Activated CD4-positive, alpha-beta T cell treated with anti-CD3 and anti-CD28 coated beads for 36 hours (primary cell): ENCODE measurements at regions of chr3 and their contacts with region 1.

Region 1: DNA sequence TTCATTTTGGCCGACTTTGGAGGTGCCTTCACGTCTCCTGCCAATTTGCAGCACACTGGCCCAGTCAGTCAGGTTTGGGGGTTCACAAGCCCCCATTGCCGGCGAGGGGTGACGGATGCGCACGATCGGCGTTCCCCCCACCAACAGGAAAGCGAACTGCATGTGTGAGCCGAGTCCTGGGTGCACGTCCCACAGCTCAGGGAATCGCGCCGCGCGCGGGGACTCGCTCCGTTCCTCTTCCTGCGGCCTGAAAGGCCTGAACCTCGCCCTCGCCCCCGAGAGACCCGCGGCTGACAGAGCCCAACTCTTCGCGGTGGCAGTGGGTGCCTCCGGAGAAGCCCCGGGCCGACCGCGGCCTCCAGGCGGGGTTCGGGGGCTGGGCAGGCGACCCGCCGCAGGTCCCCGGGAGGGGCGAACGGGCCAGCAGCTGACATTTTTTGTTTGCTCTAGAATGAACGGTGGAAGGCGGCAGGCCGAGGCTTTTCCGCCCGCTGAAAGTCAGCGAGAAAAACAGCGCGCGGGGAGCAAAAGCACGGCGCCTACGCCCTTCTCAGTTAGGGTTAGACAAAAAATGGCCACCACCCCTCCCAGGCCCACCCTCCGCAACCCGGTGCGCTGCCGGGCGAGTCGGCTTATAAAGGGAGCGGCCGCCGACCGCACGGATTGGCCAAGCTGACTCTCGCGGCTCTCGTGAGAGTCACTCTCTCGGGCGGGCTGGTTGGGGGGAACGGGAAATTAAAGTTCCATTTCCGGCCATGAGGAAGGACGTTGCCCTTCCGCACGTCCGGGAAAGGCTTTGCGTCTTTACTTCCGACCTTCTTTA is at the start of gene TERC:
- DNase-seq: peak; percentile 95
- ATAC-seq: peak; percentile 84
- H3K4me3 Mint-ChIP-seq: peak within 1 kb of the TSS; percentile 91
- H3K27ac Mint-ChIP-seq: peak within 1 kb of the TSS; percentile 98
- H3K4me1 Mint-ChIP-seq: peaks cover 23% of the 10 kb centered on the region
- H3K27me3 Mint-ChIP-seq: no peaks in the 10 kb centered on the region
- total RNA-seq, gene TERC: 2.6 to 11.1 TPM

Region 2: DNA sequence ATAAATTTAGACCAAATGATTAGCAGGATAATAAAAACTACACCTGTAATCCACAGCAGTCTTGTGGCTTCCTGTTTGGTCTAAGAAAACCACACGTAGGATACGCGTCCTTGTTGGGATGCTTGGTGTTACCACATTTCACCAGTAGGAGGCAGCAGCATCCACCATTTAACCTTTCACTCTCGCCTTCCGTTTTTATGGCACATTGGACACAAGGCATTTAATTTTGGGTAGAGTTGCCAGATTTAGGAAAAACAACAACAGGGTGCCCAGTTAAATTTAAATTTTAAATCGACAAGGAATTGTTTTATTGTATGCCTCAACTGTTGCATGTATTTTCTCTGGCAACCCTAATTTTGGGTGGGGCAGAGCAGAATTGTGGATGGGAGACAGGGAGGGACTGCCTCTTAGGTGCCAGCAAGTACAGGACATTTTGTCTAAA is 98.8 kb after region 1 on chr3:
- CTCF ChIA-PET with region 1: no interaction called
- POLR2A ChIA-PET with region 1: no interaction called
- intact Hi-C with region 1: loop called (anchors 1 to 5 kb)
- DNase-seq: peak; percentile 77
- ATAC-seq: peak; percentile 61
- H3K4me3 Mint-ChIP-seq: no peak overlapping the region
- H3K27ac Mint-ChIP-seq: no peak overlapping the region
- H3K4me1 Mint-ChIP-seq: peaks cover 18% of the 10 kb centered on the region
- H3K27me3 Mint-ChIP-seq: peaks cover 4% of the 10 kb centered on the region

Region 3: GRCh38 chr3:170037463-170038433 is 273.1 kb after region 1 on chr3 and contains the start of gene GPR160:
- CTCF ChIA-PET with region 1: no interaction called
- POLR2A ChIA-PET with region 1: no interaction called
- intact Hi-C with region 1: loop called (anchors 1 to 5 kb)
- DNase-seq: peak; percentile 92
- ATAC-seq: peak; percentile 92
- H3K4me3 Mint-ChIP-seq: peak within 1 kb of the TSS; percentile 79
- H3K27ac Mint-ChIP-seq: no peak within 1 kb of the TSS
- H3K4me1 Mint-ChIP-seq: peaks cover 19% of the 10 kb centered on the region
- H3K27me3 Mint-ChIP-seq: no peaks in the 10 kb centered on the region
- total RNA-seq, gene GPR160: 9.4 to 11.1 TPM

Region 4: DNA sequence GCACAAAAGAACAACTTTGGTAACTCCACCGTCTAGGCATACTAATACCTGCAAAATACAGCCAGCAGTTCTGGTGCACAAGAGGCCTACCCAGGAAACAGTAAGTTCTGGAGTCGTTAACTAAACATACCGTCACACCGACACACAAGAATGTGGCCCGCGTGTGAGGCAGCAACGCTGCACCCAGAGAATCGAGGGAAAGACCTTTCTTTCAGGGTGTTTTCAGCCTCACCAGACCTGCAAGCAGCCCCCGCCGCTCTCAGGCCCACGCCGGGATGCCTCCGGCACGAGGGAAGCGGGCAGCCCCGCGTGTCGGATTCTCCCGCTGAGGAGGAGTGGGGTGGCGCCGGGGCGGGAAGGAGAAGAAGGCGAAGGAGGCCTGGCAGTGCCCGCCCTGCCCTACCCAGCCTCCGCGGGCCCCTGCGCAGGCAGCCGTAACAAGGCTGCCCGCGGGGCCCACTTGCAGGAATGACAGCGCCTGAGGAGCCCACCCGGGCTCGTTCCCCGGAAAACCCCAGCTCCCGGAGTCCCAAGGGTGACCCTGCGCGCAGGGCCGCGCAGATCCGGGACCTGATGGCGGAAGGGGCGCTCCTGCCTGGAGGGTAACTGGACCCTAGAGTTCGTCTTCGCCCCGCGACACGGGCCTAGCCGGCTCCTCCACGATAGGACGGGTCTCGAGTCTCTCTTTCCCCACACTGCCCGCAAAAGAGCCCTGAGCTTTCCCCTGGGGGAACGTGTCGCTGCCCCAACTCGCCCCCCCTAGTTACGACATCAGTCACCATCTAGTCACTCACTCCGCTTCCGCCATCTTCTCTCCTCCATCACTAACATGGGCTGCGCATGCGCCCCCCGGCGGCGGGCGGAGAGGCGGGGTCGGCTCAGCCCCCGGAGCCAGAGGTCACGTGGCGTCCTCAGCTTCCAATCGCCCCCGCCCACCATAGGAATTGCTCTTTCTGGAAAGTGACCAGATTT is 416.5 kb after region 1 on chr3 and contains the start of gene PHC3:
- CTCF ChIA-PET with region 1: interaction called, 3 read pairs
- POLR2A ChIA-PET with region 1: no interaction called
- intact Hi-C with region 1: loop called in 1 of 2 experiments (anchors 2 kb)
- DNase-seq: peak; percentile 96
- ATAC-seq: peak; percentile 79
- H3K4me3 Mint-ChIP-seq: peak within 1 kb of the TSS; percentile 97
- H3K27ac Mint-ChIP-seq: peak within 1 kb of the TSS; percentile 99
- H3K4me1 Mint-ChIP-seq: peaks cover 21% of the 10 kb centered on the region
- H3K27me3 Mint-ChIP-seq: no peaks in the 10 kb centered on the region
- total RNA-seq, gene PHC3: 47.6 to 83.9 TPM

Region 5: DNA sequence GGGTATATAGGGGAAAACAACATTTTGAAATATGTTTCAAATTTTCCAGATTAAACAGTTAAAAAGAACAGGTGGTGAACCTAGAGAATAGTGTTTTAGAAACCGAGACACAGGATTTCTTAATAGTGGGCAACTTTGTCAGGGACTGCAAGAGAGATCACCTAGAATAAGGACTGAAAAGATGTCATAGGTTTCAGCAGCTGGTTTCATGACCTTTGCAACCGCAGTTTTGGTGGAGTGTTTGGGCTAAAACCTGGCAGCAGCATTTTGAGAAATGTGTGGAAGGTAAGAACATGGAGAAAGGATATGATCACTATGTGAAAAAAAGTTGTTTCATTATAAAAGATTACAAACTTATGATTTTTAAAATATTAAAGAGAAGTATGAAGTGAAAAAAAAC is 492.5 kb after region 1 on chr3:
- CTCF ChIA-PET with region 1: no interaction called
- POLR2A ChIA-PET with region 1: no interaction called
- intact Hi-C with region 1: loop called in 1 of 2 experiments (anchors 10 kb)
- DNase-seq: peak; percentile 59
- ATAC-seq: peak; percentile 66
- H3K4me3 Mint-ChIP-seq: no peak overlapping the region
- H3K27ac Mint-ChIP-seq: peak overlapping the region; percentile 58
- H3K4me1 Mint-ChIP-seq: peaks cover 43% of the 10 kb centered on the region
- H3K27me3 Mint-ChIP-seq: no peaks in the 10 kb centered on the region

Region 6: DNA sequence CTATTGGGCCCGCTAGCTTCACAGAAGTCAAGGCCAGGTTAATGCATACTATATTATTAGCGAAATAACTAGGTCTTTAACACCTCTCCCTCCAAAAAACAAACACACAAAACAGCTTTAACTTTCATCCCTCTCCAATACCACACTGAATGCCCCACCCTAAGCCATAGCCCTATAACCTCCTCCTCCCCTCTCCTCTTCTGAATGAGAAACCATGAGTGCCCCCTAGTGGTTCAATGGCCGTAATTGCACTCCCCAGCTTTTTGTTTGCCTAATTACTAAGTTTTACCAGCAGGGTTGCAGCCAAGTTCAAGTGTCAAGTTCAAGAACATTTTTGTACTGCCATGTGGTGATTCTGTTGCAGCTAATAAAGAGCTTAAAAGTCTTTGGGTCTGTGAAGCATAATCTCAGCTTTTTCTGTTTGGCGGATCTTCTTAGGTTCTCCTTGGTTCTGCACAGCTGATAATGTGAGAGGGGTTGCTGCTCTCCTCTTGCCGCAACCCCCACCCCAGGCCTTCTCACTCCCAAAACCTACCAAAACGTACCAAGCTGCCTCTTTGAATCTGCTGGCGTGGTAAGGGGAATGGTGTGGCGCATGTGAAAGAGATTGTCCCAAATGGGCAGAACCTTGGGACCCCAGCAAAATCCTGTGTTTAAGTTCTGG is 1047.4 kb after region 1 on chr3:
- CTCF ChIA-PET with region 1: interaction called, 3 read pairs
- POLR2A ChIA-PET with region 1: no interaction called
- intact Hi-C with region 1: loop called in 1 of 2 experiments (anchors 5 kb)
- DNase-seq: peak; percentile 77
- ATAC-seq: peak; percentile 88
- H3K4me3 Mint-ChIP-seq: no peak overlapping the region
- H3K27ac Mint-ChIP-seq: no peak overlapping the region
- H3K4me1 Mint-ChIP-seq: peaks cover 4% of the 10 kb centered on the region
- H3K27me3 Mint-ChIP-seq: no peaks in the 10 kb centered on the region